GM12878 (cell line): ENCODE measurements at regions of chrX and their contacts with region 1.

Region 1: GRCh38 chrX:153667956-153668396 is 5.6 kb downstream of the PNCK start:
- DNase-seq: peak; percentile 12
- ATAC-seq: peak; percentile 95
- H3K4me3 ChIP-seq: no peak overlapping the region
- H3K27ac ChIP-seq: no peak overlapping the region
- H3K4me1 ChIP-seq: no peaks in the 10 kb centered on the region
- H3K27me3 ChIP-seq: no peaks in the 10 kb centered on the region
- CTCF ChIP-seq: peak; percentile 70 to 77 (median 76)
- EP300 ChIP-seq: no peak
- POLR2A ChIP-seq: no peak
- RAD21 ChIP-seq: peak; percentile 59

Region 2: GRCh38 chrX:152946681-152947080 is 721.3 kb before region 1 on chrX:
- CTCF ChIA-PET with region 1: interaction called, 25 read pairs
- POLR2A ChIA-PET with region 1: no interaction called
- RAD21 ChIA-PET with region 1: interaction called, 6 read pairs
- SMC1A ChIA-PET with region 1: no interaction called
- in situ Hi-C with region 1: loop called (anchors 5 kb)
- intact Hi-C with region 1: loop called (anchors 5 kb)
- DNase-seq: no peak
- ATAC-seq: no peak
- H3K4me3 ChIP-seq: no peak overlapping the region
- H3K27ac ChIP-seq: no peak overlapping the region
- H3K4me1 ChIP-seq: no peaks in the 10 kb centered on the region
- H3K27me3 ChIP-seq: no peaks in the 10 kb centered on the region; a peak in 1 of 4 replicates
- CTCF ChIP-seq: no peak
- EP300 ChIP-seq: no peak
- POLR2A ChIP-seq: no peak
- RAD21 ChIP-seq: no peak

Region 3: GRCh38 chrX:153539171-153539978 is 128.6 kb before region 1 on chrX:
- CTCF ChIA-PET with region 1: interaction called, 25 read pairs
- POLR2A ChIA-PET with region 1: no interaction called
- RAD21 ChIA-PET with region 1: interaction called, 26 read pairs
- SMC1A ChIA-PET with region 1: interaction called, 9 read pairs
- in situ Hi-C with region 1: no loop called
- intact Hi-C with region 1: loop called (anchors 1 kb)
- DNase-seq: no peak
- ATAC-seq: peak; percentile 96
- H3K4me3 ChIP-seq: no peak overlapping the region
- H3K27ac ChIP-seq: no peak overlapping the region
- H3K4me1 ChIP-seq: no peaks in the 10 kb centered on the region
- H3K27me3 ChIP-seq: no peaks in the 10 kb centered on the region
- CTCF ChIP-seq: peak; percentile 85 to 91 (median 88)
- EP300 ChIP-seq: no peak
- POLR2A ChIP-seq: no peak
- RAD21 ChIP-seq: peak; percentile 65

Region 4: DNA sequence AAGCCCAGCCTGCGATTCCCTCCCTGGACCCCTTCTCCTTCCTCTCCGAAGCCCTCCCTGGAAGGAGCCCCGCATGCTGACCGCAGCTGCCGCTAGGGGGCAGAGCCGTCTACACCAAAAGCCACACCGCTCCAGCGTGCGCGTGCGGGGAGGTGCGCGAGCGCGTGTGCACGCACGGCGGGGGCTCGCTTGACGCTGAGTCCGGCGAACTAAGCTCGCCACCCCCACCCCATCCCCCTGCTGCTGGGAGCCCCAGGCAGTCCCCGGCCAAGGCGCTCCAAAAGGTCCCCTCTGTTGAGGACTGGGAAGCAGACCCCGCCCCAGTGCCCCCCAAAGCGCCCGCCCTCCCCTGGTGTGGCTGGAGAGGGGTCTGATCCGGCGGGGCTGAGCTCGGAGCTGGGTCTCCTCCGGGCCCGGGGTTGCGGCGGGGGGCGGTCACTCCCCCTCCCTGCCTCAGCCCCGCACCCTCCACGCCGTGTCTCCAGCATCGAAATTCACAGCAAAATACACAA is 58.0 kb before region 1 on chrX:
- CTCF ChIA-PET with region 1: interaction called, 5 read pairs
- POLR2A ChIA-PET with region 1: no interaction called
- RAD21 ChIA-PET with region 1: interaction called, 5 read pairs
- SMC1A ChIA-PET with region 1: no interaction called
- in situ Hi-C with region 1: no loop called
- intact Hi-C with region 1: loop called (anchors 5 kb)
- DNase-seq: no peak
- ATAC-seq: peak; percentile 92
- H3K4me3 ChIP-seq: no peak overlapping the region; the same call in 1 of the 2 replicates
- H3K27ac ChIP-seq: no peak overlapping the region
- H3K4me1 ChIP-seq: peaks cover 3% of the 10 kb centered on the region
- H3K27me3 ChIP-seq: no peaks in the 10 kb centered on the region; a peak in 2 of 4 replicates
- CTCF ChIP-seq: peak; percentile 51 to 80 (median 63)
- EP300 ChIP-seq: no peak
- POLR2A ChIP-seq: no peak
- RAD21 ChIP-seq: peak; percentile 55

Region 5: GRCh38 chrX:153735274-153735673 is 67.3 kb after region 1 on chrX:
- CTCF ChIA-PET with region 1: interaction called, 4 read pairs
- POLR2A ChIA-PET with region 1: no interaction called
- RAD21 ChIA-PET with region 1: no interaction called
- SMC1A ChIA-PET with region 1: no interaction called
- in situ Hi-C with region 1: loop called (anchors 10 kb)
- intact Hi-C with region 1: no loop called
- DNase-seq: no peak
- ATAC-seq: peak; percentile 91
- H3K4me3 ChIP-seq: no peak overlapping the region
- H3K27ac ChIP-seq: no peak overlapping the region
- H3K4me1 ChIP-seq: no peaks in the 10 kb centered on the region
- H3K27me3 ChIP-seq: no peaks in the 10 kb centered on the region
- CTCF ChIP-seq: peak in 1 of 3 experiments; percentile 18; a peak in 1 of 6 replicates
- EP300 ChIP-seq: no peak
- POLR2A ChIP-seq: no peak
- RAD21 ChIP-seq: no peak

Region 6: GRCh38 chrX:154819771-154820341 is 1151.9 kb after region 1 on chrX:
- CTCF ChIA-PET with region 1: no interaction called
- POLR2A ChIA-PET with region 1: no interaction called
- RAD21 ChIA-PET with region 1: no interaction called
- SMC1A ChIA-PET with region 1: no interaction called
- in situ Hi-C with region 1: no loop called
- intact Hi-C with region 1: no loop called
- DNase-seq: no peak
- ATAC-seq: peak; percentile 94
- H3K4me3 ChIP-seq: no peak overlapping the region
- H3K27ac ChIP-seq: peak overlapping the region; percentile 20; the same call in 1 of the 2 replicates
- H3K4me1 ChIP-seq: no peaks in the 10 kb centered on the region; the same call in 1 of the 2 replicates
- H3K27me3 ChIP-seq: no peaks in the 10 kb centered on the region
- CTCF ChIP-seq: no peak
- EP300 ChIP-seq: no peak
- POLR2A ChIP-seq: no peak
- RAD21 ChIP-seq: no peak